Activated B cell treated with CpG ODN at 0.5 μM for 24 hours (primary cell): ENCODE measurements at regions of chr20 and their contacts with region 1.

Region 1: GRCh38 chr20:10434832-10435812 is at the start of gene SLX4IP:
- DNase-seq: peak; percentile 65
- ATAC-seq: peak; percentile 70
- H3K4me3 Mint-ChIP-seq: peak within 1 kb of the TSS; percentile 96
- H3K27ac Mint-ChIP-seq: peak within 1 kb of the TSS; percentile 98
- H3K4me1 Mint-ChIP-seq: peaks cover 34% of the 10 kb centered on the region
- H3K27me3 Mint-ChIP-seq: no peaks in the 10 kb centered on the region
- CTCF ChIP-seq: no peak
- total RNA-seq, gene SLX4IP: 7.4 and 8.6 TPM in 2 replicates

Region 2: DNA sequence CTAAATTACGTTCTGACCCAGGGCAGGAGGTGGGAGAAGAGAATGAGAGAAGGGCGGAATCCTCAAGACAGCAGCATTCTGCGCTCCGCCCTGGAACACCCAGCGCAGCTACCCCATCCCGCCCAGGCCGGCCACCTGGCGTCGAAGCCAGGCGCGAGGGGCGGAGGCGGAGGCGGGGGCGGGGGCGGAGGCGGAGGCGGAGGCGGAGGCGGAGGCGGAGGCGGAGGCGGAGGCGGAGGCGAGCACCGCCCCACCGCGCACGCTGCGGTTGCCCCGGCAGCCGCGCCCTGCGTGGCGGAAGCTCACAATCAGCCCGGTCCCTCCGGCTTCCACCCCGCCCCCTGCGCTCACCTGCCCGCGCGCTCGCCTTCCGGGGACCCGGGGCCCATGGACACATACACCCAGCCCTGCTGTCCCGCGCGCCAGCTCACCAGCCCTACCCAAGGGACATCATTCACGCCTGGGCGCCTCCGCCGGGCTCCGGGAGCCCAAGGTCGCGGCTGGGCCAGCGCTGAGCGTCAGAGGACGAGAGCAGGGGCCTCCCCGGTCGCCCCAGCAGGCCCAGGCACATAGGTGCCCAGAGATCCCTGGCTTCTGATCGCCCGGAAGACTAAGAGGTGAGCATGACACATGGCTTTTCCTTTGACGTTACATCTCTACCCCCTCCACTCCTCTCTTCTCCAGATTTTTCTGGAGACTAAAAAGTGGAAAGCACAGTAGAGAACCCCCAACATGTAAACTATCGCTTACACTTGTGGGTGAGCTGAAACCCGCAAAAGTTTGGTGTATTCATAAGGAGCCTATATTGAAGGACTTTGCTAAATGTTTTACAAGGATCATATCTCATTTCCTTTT is 400.2 kb before region 1 on chr20 and contains the start of gene ANKEF1:
- CTCF ChIA-PET with region 1: no interaction called
- POLR2A ChIA-PET with region 1: interaction called, 5 read pairs
- intact Hi-C with region 1: loop called (anchors 2 kb)
- DNase-seq: peak; percentile 73
- ATAC-seq: peak; percentile 97
- H3K4me3 Mint-ChIP-seq: peak within 1 kb of the TSS; percentile 75
- H3K27ac Mint-ChIP-seq: no peak within 1 kb of the TSS
- H3K4me1 Mint-ChIP-seq: peaks cover 6% of the 10 kb centered on the region
- H3K27me3 Mint-ChIP-seq: peaks cover 13% of the 10 kb centered on the region
- CTCF ChIP-seq: no peak
- total RNA-seq, gene ANKEF1: 2.0 and 2.6 TPM in 2 replicates

Region 3: GRCh38 chr20:10219452-10219791 is 215.7 kb before region 1 on chr20:
- CTCF ChIA-PET with region 1: no interaction called
- POLR2A ChIA-PET with region 1: no interaction called
- intact Hi-C with region 1: loop called (anchors 10 kb)
- DNase-seq: peak; percentile 54
- ATAC-seq: peak; percentile 64
- H3K4me3 Mint-ChIP-seq: peak overlapping the region; percentile 11
- H3K27ac Mint-ChIP-seq: no peak overlapping the region
- H3K4me1 Mint-ChIP-seq: peaks cover 14% of the 10 kb centered on the region
- H3K27me3 Mint-ChIP-seq: peaks cover 53% of the 10 kb centered on the region
- CTCF ChIP-seq: no peak

Region 4: GRCh38 chr20:10453241-10453640 is 18.1 kb after region 1 on chr20:
- CTCF ChIA-PET with region 1: no interaction called
- POLR2A ChIA-PET with region 1: interaction called, 17 read pairs
- intact Hi-C with region 1: no loop called
- DNase-seq: no peak
- ATAC-seq: peak; percentile 62
- H3K4me3 Mint-ChIP-seq: peak overlapping the region; percentile 39
- H3K27ac Mint-ChIP-seq: peak overlapping the region; percentile 62
- H3K4me1 Mint-ChIP-seq: peaks cover 21% of the 10 kb centered on the region
- H3K27me3 Mint-ChIP-seq: no peaks in the 10 kb centered on the region
- CTCF ChIP-seq: no peak

Region 5: GRCh38 chr20:10673988-10674711 is 239.0 kb after region 1 on chr20 and contains the start of gene JAG1:
- CTCF ChIA-PET with region 1: no interaction called
- POLR2A ChIA-PET with region 1: interaction called, 3 read pairs
- intact Hi-C with region 1: loop called (anchors 2 kb)
- DNase-seq: peak; percentile 52
- ATAC-seq: peak; percentile 76
- H3K4me3 Mint-ChIP-seq: peak within 1 kb of the TSS; percentile 83
- H3K27ac Mint-ChIP-seq: no peak within 1 kb of the TSS
- H3K4me1 Mint-ChIP-seq: peaks cover 37% of the 10 kb centered on the region
- H3K27me3 Mint-ChIP-seq: peaks cover 51% of the 10 kb centered on the region
- CTCF ChIP-seq: no peak
- total RNA-seq, gene JAG1: not detected in 2 replicates